CD8-positive, alpha-beta T cell (primary cell): ENCODE measurements at regions of chr2 and their contacts with region 1.

Region 1: DNA sequence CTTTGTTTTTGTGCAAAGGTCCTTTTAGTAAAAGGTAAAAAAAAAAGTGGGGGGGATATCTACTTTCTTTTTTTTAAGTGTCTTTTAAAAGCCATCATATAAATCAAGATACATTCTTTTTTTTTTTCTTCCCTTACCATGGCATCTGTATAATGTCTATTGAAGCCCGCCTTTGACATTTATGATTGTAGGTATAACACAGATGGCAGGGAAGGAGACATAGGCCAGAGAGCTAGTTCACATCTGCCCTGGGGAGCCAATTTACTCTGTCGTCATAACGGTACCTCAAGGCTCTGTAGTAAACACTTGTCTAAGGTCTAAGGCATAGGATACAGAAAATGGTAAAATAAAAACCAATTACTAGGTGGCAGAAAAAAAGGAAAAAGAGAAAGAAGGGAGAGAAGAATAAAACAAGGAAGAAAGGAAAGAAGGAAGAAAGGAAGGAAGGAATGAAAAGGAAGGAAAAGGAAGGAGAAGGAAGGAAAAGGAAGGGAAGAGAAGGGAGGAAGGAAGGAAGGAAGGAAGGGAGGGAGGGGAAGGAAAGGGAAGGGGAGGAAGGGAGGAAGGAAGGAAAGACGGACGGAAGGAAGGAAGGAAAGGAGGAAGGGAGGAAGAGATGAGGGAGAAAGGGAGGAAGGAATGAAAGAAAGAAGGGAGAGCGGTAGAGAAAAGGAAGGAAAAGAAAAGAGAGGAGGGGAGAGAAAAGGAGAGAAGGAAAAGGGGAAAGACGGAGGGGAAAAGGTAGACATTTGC is 343.5 kb downstream of the RBM43 start:
- DNase-seq: no peak
- ATAC-seq: no peak
- H3K4me3 ChIP-seq: no peak overlapping the region
- H3K4me3 Mint-ChIP-seq: no peak overlapping the region
- H3K27ac ChIP-seq: no peak overlapping the region
- H3K27ac Mint-ChIP-seq: no peak overlapping the region
- H3K4me1 ChIP-seq: no peaks in the 10 kb centered on the region
- H3K4me1 Mint-ChIP-seq: no peaks in the 10 kb centered on the region
- H3K27me3 ChIP-seq: no peaks in the 10 kb centered on the region
- H3K27me3 Mint-ChIP-seq: no peaks in the 10 kb centered on the region
- CTCF ChIP-seq: no peak

Region 2: DNA sequence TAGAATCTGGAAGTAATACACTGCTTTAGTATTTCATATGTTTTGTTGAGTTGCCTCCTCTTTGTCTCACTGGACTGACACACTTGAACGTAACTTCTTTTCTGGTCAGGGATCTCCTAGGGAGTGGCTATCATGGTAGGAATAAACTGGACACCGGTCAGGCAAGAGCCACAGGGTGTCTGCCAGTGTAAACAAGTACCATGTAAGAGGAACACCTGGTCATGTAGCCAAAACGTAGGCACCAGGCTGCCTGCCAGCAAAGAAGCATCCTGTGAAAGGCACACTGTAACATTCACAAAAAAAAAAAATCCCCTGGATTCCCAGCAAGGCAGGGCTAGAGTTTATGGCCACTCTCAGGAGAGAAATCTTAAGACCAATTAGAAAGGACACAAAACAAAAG is 57.8 kb before region 1 on chr2:
- CTCF ChIA-PET with region 1: no interaction called
- POLR2A ChIA-PET with region 1: no interaction called
- intact Hi-C with region 1: no loop called
- DNase-seq: no peak
- ATAC-seq: no peak
- H3K4me3 ChIP-seq: no peak overlapping the region
- H3K4me3 Mint-ChIP-seq: no peak overlapping the region
- H3K27ac ChIP-seq: no peak overlapping the region
- H3K27ac Mint-ChIP-seq: no peak overlapping the region
- H3K4me1 ChIP-seq: no peaks in the 10 kb centered on the region
- H3K4me1 Mint-ChIP-seq: no peaks in the 10 kb centered on the region
- H3K27me3 ChIP-seq: no peaks in the 10 kb centered on the region
- H3K27me3 Mint-ChIP-seq: no peaks in the 10 kb centered on the region
- CTCF ChIP-seq: no peak

Region 3: GRCh38 chr2:150903461-150903860 is 14.7 kb before region 1 on chr2:
- CTCF ChIA-PET with region 1: no interaction called
- POLR2A ChIA-PET with region 1: no interaction called
- intact Hi-C with region 1: no loop called
- DNase-seq: no peak
- ATAC-seq: no peak
- H3K4me3 ChIP-seq: no peak overlapping the region
- H3K4me3 Mint-ChIP-seq: no peak overlapping the region
- H3K27ac ChIP-seq: no peak overlapping the region
- H3K27ac Mint-ChIP-seq: no peak overlapping the region
- H3K4me1 ChIP-seq: no peaks in the 10 kb centered on the region
- H3K4me1 Mint-ChIP-seq: no peaks in the 10 kb centered on the region
- H3K27me3 ChIP-seq: no peaks in the 10 kb centered on the region
- H3K27me3 Mint-ChIP-seq: no peaks in the 10 kb centered on the region
- CTCF ChIP-seq: no peak

Region 4: GRCh38 chr2:150946831-150947230 is 28.7 kb after region 1 on chr2:
- CTCF ChIA-PET with region 1: no interaction called
- POLR2A ChIA-PET with region 1: no interaction called
- intact Hi-C with region 1: loop called in 1 of 2 experiments (anchors 1 kb)
- DNase-seq: no peak
- ATAC-seq: no peak
- H3K4me3 ChIP-seq: no peak overlapping the region
- H3K4me3 Mint-ChIP-seq: no peak overlapping the region
- H3K27ac ChIP-seq: no peak overlapping the region
- H3K27ac Mint-ChIP-seq: no peak overlapping the region
- H3K4me1 ChIP-seq: no peaks in the 10 kb centered on the region
- H3K4me1 Mint-ChIP-seq: no peaks in the 10 kb centered on the region
- H3K27me3 ChIP-seq: no peaks in the 10 kb centered on the region
- H3K27me3 Mint-ChIP-seq: no peaks in the 10 kb centered on the region
- CTCF ChIP-seq: no peak

Region 5: GRCh38 chr2:150985741-150986140 is 67.6 kb after region 1 on chr2:
- CTCF ChIA-PET with region 1: no interaction called
- POLR2A ChIA-PET with region 1: no interaction called
- intact Hi-C with region 1: no loop called
- DNase-seq: no peak
- ATAC-seq: no peak
- H3K4me3 ChIP-seq: no peak overlapping the region
- H3K4me3 Mint-ChIP-seq: no peak overlapping the region
- H3K27ac ChIP-seq: no peak overlapping the region
- H3K27ac Mint-ChIP-seq: no peak overlapping the region
- H3K4me1 ChIP-seq: no peaks in the 10 kb centered on the region
- H3K4me1 Mint-ChIP-seq: no peaks in the 10 kb centered on the region
- H3K27me3 ChIP-seq: no peaks in the 10 kb centered on the region
- H3K27me3 Mint-ChIP-seq: peaks cover 15% of the 10 kb centered on the region
- CTCF ChIP-seq: no peak